Activated CD4-positive, alpha-beta T cell treated with anti-CD3 and anti-CD28 coated beads for 36 hours (primary cell): ENCODE measurements at regions of chr9 and their contacts with region 1.

Region 1: GRCh38 chr9:127316586-127317323 is 52.2 kb downstream of the GARNL3 start:
- DNase-seq: peak; percentile 31
- ATAC-seq: peak; percentile 90
- H3K4me3 Mint-ChIP-seq: no peak overlapping the region
- H3K27ac Mint-ChIP-seq: no peak overlapping the region
- H3K4me1 Mint-ChIP-seq: peaks cover 14% of the 10 kb centered on the region
- H3K27me3 Mint-ChIP-seq: peaks cover 24% of the 10 kb centered on the region

Region 2: GRCh38 chr9:127388037-127388855 is 71.5 kb after region 1 on chr9:
- CTCF ChIA-PET with region 1: no interaction called
- POLR2A ChIA-PET with region 1: no interaction called
- intact Hi-C with region 1: loop called (anchors 2 to 10 kb)
- DNase-seq: peak; percentile 94
- ATAC-seq: peak; percentile 97
- H3K4me3 Mint-ChIP-seq: peak overlapping the region; percentile 3
- H3K27ac Mint-ChIP-seq: peak overlapping the region; percentile 81
- H3K4me1 Mint-ChIP-seq: peaks cover 20% of the 10 kb centered on the region
- H3K27me3 Mint-ChIP-seq: peaks cover 68% of the 10 kb centered on the region